ENCODE measurements at regions of chr18 and their contacts with region 1.

Region 1: GRCh38 chr18:9136315-9137155 is at the start of gene ANKRD12:
- DNase-seq: peak; percentile 100
- H3K4me3 Mint-ChIP-seq: peak within 1 kb of the TSS; percentile 94
- H3K27ac Mint-ChIP-seq: peak within 1 kb of the TSS; percentile 99
- H3K4me1 Mint-ChIP-seq: peaks cover 54% of the 10 kb centered on the region
- H3K27me3 Mint-ChIP-seq: no peaks in the 10 kb centered on the region
- total RNA-seq, gene ANKRD12: 60.8 TPM in 2 replicates

Region 2: DNA sequence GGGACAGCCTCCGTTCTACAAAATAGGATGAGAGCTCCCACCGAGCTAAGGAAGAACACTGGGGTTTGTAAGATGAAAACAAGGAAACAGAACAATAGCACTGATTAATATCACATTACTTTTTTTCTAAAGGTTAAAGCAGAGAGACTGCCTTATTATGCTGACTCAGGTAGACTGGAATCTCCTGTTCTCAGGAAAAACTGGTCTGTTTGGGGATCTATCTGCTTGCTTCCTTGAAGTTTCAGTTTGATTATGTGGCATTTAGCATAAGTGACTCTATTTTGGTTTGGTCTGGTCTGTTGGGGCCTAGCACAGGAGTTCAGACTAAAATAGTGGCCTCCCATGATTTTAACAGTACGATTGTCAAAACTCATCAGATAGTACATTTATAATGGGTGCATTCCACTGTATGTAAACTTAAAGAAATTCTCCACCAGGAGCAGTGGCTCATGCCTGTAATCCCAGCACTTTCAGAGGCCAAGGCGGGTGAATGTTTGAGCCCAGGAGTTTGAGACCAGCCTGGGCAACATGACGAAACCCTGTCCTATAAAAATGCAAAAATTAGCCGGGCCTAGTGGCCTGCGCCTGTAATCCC is 98.2 kb before region 1 on chr18:
- intact Hi-C with region 1: no loop called
- DNase-seq: no peak
- H3K4me3 Mint-ChIP-seq: no peak overlapping the region
- H3K27ac Mint-ChIP-seq: no peak overlapping the region
- H3K4me1 Mint-ChIP-seq: peaks cover 2% of the 10 kb centered on the region
- H3K27me3 Mint-ChIP-seq: no peaks in the 10 kb centered on the region

Region 3: DNA sequence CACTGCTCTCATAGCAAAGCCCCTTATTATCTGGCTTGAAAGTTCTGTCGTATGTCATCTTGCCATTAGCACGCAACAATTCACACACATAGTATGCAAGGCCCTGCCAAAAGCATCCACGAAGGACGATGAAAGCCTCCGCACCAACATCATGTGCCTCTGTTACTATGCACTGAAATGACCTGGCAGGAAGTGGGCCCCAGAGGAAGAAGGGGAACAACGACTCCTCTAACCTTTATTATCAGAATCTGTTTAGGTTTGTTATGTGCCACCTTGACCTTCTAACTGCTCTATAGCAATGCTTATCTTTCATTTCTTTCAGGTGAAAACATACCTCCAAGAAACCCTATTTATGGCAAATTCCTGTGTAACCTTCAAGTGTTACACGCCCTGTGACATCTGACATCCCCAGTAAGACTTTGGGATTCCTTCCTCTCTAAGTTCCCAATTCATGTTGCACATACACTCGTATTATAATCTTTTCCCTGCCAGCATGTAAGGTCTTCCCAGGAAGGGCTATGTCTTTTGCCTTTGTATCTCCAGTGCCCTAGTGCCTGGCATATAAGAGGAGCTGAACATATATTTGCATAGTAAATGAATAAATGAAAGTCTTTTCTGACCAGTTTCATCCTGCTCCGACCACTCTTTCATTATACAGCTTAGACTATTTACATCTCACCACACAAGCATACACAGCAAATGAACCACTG is 41.1 kb before region 1 on chr18:
- intact Hi-C with region 1: loop called (anchors 1 kb)
- DNase-seq: peak; percentile 89
- H3K4me3 Mint-ChIP-seq: peak overlapping the region; percentile 77
- H3K27ac Mint-ChIP-seq: peak overlapping the region; percentile 98
- H3K4me1 Mint-ChIP-seq: peaks cover 67% of the 10 kb centered on the region
- H3K27me3 Mint-ChIP-seq: no peaks in the 10 kb centered on the region

Region 4: GRCh38 chr18:9102508-9103375 is 33.8 kb before region 1 on chr18 and contains the start of gene NDUFV2:
- intact Hi-C with region 1: loop called (anchors 1 kb)
- DNase-seq: peak; percentile 100
- H3K4me3 Mint-ChIP-seq: peak within 1 kb of the TSS; percentile 95
- H3K27ac Mint-ChIP-seq: peak within 1 kb of the TSS; percentile 98
- H3K4me1 Mint-ChIP-seq: peaks cover 54% of the 10 kb centered on the region
- H3K27me3 Mint-ChIP-seq: no peaks in the 10 kb centered on the region
- total RNA-seq, gene NDUFV2: 357 and 360 TPM in 2 replicates

Measured in activated CD4-positive, alpha-beta T cell treated with anti-CD3 and anti-CD28 coated beads, Interleukin-2, amount 10 ng/mL, durations not matched to agents 24 days and 14 days (primary cell).